HCT116 (cell line): ENCODE measurements at regions of chr3 and their contacts with region 1.

Region 1: DNA sequence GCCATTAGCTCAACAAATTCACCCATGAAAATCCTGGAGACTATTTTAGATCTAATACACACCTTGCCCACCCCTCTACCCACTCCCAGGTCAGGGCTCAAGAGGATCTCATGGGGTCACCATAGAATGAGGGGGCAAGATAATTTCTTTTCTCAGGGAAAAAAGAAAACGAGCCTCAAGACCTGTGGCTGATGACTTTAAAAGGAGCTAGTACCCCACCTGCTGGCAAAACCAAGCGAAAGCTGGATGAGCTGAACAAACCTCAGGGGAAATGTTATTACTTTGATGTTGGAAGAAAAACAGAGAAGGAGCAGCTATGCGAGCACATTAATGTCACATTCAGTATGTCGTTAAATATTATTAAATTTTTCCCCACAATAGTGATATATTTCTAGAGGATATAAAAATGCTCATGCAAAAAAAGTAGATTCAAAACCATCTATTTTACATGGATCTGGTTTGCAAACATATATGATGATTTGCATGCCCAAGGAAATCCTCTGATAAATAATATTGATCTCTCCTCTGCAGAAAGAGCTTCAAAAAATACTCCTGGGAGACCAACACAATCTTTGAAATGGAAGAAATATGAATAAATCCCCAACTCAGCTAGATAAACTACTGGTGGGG is 37.7 kb downstream of the PLD1 start:
- DNase-seq: peak; percentile 52
- ATAC-seq: peak; percentile 76
- H3K4me3 ChIP-seq: no peak overlapping the region
- H3K27ac ChIP-seq: no peak overlapping the region
- H3K4me1 ChIP-seq: 0 out of 4 replicates have a peak, but pooled peaks cover 0 to 5% of the 10 kb centered on the region in 2 experiments
- H3K27me3 ChIP-seq: no peaks in the 10 kb centered on the region
- CTCF ChIP-seq: peak; percentile 68 to 77 (median 72); a peak in 5 of 6 replicates
- POLR2A ChIP-seq: no peak
- RAD21 ChIP-seq: peak; percentile 85

Region 2: DNA sequence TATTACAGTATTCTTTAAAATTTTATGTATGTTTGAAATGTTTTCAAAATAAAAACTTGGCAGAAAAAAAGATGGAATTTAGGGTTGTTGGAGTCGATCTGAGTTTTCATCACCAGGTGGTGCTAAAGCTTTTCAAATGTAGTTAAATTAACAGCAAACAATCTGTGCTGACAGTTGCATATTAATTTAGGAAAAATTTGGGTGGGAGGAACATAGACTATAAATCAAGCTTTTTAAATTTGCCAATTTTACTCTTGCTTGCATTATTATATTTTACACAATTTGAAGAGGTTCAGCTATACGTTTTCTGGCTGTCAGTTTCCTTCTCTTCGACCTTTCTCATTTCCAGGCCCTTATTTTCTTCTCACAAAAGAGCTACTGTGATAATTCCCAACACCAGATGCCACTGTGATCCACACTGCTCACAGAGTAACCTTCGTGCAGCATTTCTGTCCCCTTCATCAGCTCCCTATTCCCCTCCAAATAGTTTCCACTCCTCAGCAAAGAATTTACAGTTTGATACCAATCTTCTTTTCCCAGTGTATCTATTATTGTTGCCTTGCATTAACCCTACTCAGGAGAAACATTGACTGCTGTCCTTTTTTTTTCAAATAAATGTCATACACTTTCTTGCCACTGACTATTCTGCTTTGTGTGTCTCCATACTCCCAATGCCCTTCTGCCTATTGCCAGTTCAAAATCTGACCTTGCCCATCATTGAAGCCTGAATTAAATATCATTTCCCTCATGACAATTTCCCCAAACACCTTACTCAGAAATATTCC is 810.7 kb before region 1 on chr3:
- CTCF ChIA-PET with region 1: interaction called, 56 read pairs
- POLR2A ChIA-PET with region 1: no interaction called
- RAD21 ChIA-PET with region 1: interaction called, 3 to 6 read pairs
- intact Hi-C with region 1: loop called (anchors 1 kb)
- DNase-seq: peak; percentile 34
- ATAC-seq: peak; percentile 55
- H3K4me3 ChIP-seq: no peak overlapping the region
- H3K27ac ChIP-seq: no peak overlapping the region
- H3K4me1 ChIP-seq: no peaks in the 10 kb centered on the region
- H3K27me3 ChIP-seq: no peaks in the 10 kb centered on the region
- CTCF ChIP-seq: peak; percentile 37 to 85 (median 73)
- POLR2A ChIP-seq: no peak
- RAD21 ChIP-seq: peak; percentile 79

Region 3: DNA sequence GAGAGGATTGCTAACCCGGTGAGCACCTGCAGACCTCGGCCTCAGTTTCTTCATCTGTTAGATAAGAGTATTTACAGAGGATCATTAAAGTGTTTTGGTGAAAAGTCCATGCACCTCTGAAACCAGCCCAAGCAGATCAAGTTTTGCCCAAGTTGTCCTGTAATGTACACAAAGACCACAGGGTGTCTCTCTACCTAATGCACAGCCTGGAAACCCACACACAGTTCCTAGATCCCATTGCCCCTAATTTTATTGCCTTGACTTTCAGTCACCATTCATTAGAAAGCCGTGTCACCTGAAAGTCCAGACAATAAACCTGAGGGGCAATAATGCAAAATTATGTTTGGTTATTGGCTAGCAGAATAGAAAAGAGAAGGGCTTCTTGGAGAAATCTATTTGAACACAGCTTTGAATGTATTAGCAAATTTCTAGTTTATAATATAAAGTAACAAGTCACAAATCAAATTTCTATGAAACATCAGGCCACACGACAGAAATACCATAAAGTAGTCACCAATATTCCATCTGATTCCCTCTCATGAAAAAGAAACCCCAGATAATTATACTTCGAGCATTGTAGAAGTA is 584.7 kb before region 1 on chr3:
- CTCF ChIA-PET with region 1: no interaction called
- POLR2A ChIA-PET with region 1: no interaction called
- RAD21 ChIA-PET with region 1: no interaction called
- intact Hi-C with region 1: loop called (anchors 10 kb)
- DNase-seq: no peak
- ATAC-seq: peak; percentile 57
- H3K4me3 ChIP-seq: no peak overlapping the region
- H3K27ac ChIP-seq: no peak overlapping the region
- H3K4me1 ChIP-seq: peaks cover 24 to 30% of the 10 kb centered on the region in 2 experiments
- H3K27me3 ChIP-seq: no peaks in the 10 kb centered on the region
- CTCF ChIP-seq: peak; percentile 59 to 72 (median 71); a peak in 5 of 6 replicates
- POLR2A ChIP-seq: no peak
- RAD21 ChIP-seq: peak; percentile 87

Region 4: DNA sequence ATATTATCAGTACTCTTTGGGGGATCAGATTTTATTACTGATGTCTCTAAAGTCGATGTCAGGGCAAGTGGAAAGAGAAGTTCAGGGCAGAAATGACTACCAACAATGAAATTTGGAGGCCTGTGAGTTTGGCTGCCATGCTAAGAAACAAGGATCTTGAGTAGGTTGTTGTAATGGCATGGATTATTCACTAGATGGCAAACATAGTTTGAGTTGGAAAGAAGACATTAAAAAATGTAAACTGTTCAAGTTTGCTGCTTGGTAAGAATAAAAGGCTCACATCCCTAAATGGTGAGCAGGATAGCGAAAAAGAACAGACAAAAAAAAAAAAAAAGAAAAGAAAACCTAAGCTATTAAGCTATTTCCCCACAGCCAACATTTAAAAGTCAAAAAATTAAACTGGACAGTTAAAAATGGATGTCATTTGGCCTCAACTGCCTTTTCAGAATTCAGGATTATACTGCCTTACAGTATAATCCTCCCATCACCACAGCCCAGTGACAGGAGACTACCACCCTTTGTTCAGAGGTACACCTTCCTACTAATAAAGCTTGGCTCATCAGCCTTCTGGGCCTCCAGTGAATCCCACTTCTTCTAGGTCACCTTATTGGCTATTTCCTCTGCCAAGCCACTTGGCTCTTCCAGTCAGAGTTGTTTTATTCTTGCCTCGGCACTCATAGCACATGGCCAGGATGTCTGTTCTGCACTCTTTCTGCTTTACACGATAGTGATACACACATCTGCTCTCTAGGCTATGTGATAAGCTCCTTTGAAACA is 126.0 kb before region 1 on chr3:
- CTCF ChIA-PET with region 1: interaction called, 23 read pairs
- POLR2A ChIA-PET with region 1: no interaction called
- RAD21 ChIA-PET with region 1: no interaction called
- intact Hi-C with region 1: loop called (anchors 1 kb)
- DNase-seq: peak; percentile 36
- ATAC-seq: peak; percentile 49; the same call in 1 of the 2 replicates
- H3K4me3 ChIP-seq: no peak overlapping the region
- H3K27ac ChIP-seq: no peak overlapping the region
- H3K4me1 ChIP-seq: no peaks in the 10 kb centered on the region
- H3K27me3 ChIP-seq: no peaks in the 10 kb centered on the region
- CTCF ChIP-seq: peak; percentile 45 to 69 (median 58)
- POLR2A ChIP-seq: no peak
- RAD21 ChIP-seq: peak; percentile 79

Region 5: GRCh38 chr3:171757361-171758034 is 15.0 kb before region 1 on chr3:
- CTCF ChIA-PET with region 1: interaction called, 16 read pairs
- POLR2A ChIA-PET with region 1: no interaction called
- RAD21 ChIA-PET with region 1: no interaction called
- intact Hi-C with region 1: no loop called
- DNase-seq: no peak
- ATAC-seq: no peak
- H3K4me3 ChIP-seq: no peak overlapping the region
- H3K27ac ChIP-seq: no peak overlapping the region
- H3K4me1 ChIP-seq: no peaks in the 10 kb centered on the region
- H3K27me3 ChIP-seq: peaks cover 17% of the 10 kb centered on the region; the same call in 1 of the 2 replicates
- CTCF ChIP-seq: no peak
- POLR2A ChIP-seq: no peak
- RAD21 ChIP-seq: no peak

Region 6: DNA sequence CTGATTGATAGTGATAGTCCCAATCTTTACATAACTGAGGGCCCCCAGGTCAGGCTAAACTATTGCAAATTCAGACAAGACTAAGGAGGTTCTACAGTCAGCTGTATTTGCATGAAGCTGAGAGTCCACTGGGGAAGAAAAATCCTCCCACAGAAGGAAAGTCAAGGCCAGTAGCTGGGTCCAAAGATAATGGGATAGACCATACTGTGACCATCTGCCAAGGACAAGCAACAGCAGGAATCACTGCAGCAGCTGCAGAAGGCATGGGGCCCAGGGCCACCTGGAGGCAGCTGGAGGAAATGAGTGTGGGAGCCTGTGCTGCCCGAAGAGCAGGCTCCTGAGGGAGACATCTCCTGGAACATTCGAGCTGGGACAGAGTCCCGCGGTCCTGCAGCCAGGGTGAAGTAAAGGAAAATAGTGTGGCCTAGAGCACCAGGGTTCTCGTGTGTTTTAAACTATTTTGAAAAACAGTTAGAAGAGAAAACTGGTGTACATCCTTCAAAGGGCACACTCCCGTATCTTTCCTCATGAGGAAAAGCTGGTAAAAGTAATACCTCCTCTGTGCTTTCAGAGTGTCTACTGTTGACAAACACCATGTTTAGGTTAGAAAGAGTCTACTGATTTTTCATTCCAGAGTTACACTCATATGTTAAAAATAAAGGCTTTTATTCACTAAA is 57.4 kb after region 1 on chr3:
- CTCF ChIA-PET with region 1: interaction called, 16 read pairs
- POLR2A ChIA-PET with region 1: no interaction called
- RAD21 ChIA-PET with region 1: interaction called, 3 to 6 read pairs
- intact Hi-C with region 1: no loop called
- DNase-seq: no peak
- ATAC-seq: peak; percentile 98
- H3K4me3 ChIP-seq: no peak overlapping the region
- H3K27ac ChIP-seq: no peak overlapping the region
- H3K4me1 ChIP-seq: peaks cover 3 to 8% of the 10 kb centered on the region in 2 experiments; a peak in 2 of 4 replicates
- H3K27me3 ChIP-seq: no peaks in the 10 kb centered on the region
- CTCF ChIP-seq: peak; percentile 76 to 86 (median 80)
- POLR2A ChIP-seq: no peak
- RAD21 ChIP-seq: peak; percentile 84